HEK293 (cell line): ENCODE measurements at regions of chr19 and their contacts with region 1.

Region 1: DNA sequence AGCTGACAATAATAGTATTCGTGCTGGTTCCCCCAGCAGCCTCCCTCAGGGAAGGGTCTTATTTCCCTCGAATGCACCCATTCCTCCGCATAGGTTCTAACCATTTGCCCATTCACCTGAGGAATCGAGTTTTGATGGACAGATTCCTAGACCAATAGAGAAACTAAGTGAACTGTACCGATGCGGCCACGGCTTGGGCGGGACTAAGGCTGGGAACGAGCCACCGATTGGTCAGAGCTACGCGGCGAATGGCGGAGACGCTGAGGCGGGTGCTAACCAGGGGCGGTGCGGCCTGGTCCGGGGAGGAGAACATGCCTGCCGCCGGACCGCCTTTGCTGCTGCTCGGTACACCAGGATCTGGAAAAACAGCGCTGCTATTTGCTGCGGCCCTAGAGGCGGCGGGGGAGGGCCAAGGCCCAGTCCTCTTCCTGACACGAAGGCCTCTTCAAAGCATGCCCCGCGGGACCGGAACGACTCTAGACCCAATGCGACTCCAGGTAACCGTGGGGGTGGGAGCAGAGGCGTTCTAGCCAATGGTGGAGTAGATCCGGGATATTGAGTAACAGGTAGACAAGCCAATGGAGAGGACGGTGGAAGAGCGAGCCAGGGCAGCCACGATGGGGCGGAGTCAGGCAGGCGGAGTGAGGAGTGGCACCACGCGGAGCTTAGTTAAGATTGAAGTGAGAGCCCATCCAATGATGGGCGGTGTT is at the start of gene SWSAP1:
- H3K4me3 ChIP-seq: peak within 1 kb of the TSS; percentile 86
- H3K27ac ChIP-seq: peak within 1 kb of the TSS; percentile 86
- H3K4me1 ChIP-seq: peaks cover 4% of the 10 kb centered on the region; the same call in 1 of the 2 replicates
- CTCF ChIP-seq: no peak

Region 2: GRCh38 chr19:11293433-11294389 is 80.9 kb before region 1 on chr19:
- CTCF ChIA-PET with region 1: interaction called, 9 read pairs
- POLR2A ChIA-PET with region 1: interaction called, 15 read pairs
- H3K4me3 ChIP-seq: no peak overlapping the region
- H3K27ac ChIP-seq: no peak overlapping the region
- H3K4me1 ChIP-seq: no peaks in the 10 kb centered on the region; the same call in 1 of the 2 replicates
- CTCF ChIP-seq: peak; percentile 93

Region 3: GRCh38 chr19:11339254-11340098 is 35.1 kb before region 1 on chr19 and contains the start of gene RAB3D:
- CTCF ChIA-PET with region 1: no interaction called
- POLR2A ChIA-PET with region 1: interaction called, 12 read pairs
- H3K4me3 ChIP-seq: peak within 1 kb of the TSS; percentile 46
- H3K27ac ChIP-seq: peak within 1 kb of the TSS; percentile 47; the same call in 1 of the 2 replicates
- H3K4me1 ChIP-seq: no peaks in the 10 kb centered on the region
- CTCF ChIP-seq: no peak

Region 4: DNA sequence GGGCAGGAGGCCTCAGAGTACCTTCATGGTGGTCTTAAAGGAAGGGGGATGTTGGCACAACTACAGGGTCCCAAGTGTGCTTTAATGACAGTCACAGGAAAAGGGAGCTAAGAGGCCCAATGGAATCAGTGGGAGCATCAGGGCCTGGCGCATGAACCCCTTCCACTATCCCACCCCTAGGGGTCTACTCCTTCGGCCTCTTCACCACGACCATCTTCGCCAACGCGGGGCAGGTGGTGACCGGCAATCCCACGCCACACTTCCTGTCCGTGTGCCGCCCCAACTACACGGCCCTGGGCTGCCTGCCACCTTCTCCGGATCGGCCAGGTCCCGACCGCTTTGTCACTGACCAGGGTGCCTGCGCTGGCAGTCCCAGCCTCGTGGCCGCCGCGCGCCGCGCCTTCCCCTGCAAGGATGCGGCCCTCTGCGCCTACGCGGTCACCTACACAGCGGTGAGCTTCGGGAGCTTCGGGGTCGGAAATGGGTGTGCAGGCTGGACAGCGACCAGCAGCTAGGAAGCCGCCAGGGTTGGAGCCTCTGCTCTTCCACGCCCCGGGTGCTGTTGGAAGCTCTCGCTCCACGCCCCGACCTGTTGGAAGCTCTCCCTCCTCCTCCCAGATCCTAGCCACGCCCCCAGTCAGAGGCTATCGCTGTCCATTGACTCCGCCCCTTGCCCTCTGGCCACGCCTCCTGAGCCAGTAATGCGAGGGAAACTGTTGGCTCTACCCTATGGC is 13.4 kb before region 1 on chr19:
- CTCF ChIA-PET with region 1: interaction called, 4 read pairs
- POLR2A ChIA-PET with region 1: interaction called, 15 read pairs
- H3K4me3 ChIP-seq: no peak overlapping the region
- H3K27ac ChIP-seq: no peak overlapping the region
- H3K4me1 ChIP-seq: no peaks in the 10 kb centered on the region
- CTCF ChIP-seq: no peak

Region 5: GRCh38 chr19:11405846-11406643 is 31.5 kb after region 1 on chr19:
- CTCF ChIA-PET with region 1: no interaction called
- POLR2A ChIA-PET with region 1: no interaction called
- H3K4me3 ChIP-seq: no peak overlapping the region
- H3K27ac ChIP-seq: no peak overlapping the region
- H3K4me1 ChIP-seq: no peaks in the 10 kb centered on the region
- CTCF ChIP-seq: no peak

Region 6: DNA sequence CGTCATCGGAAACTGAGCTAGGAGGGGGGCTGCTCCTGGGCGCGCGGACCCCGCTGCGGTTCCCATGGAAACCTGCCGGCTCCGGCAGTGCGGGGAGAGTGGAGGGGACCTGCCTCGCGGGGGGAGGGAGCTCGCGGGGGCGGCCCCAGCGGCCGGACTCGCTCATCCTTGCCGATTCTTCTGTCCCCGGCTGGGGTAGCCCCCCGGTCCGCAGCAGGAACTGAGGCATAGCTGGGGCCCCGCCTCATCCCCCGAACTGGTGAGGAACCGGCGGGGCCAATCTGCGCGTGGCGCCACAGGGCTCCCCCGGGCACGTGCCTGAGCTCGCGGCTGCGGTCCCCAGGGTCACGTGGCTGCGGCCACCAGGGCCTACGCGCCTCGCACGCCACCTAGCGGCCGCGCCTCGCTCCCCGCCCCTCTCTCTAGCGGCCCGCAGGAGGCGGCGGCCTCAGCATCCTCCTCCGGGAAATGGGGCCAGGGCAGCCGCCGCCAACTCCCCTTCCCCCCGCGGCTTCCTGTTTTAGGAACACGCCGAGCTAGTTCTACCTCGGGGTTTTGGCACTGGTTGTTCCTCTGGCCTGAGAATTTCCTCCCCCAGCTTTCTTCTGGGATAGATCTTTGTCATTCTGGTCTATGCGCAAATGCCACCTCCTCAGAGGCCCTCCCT is 107.9 kb after region 1 on chr19:
- CTCF ChIA-PET with region 1: interaction called, 11 read pairs
- POLR2A ChIA-PET with region 1: interaction called, 13 read pairs
- H3K4me3 ChIP-seq: peak overlapping the region; percentile 28
- H3K27ac ChIP-seq: peak overlapping the region; percentile 33; the same call in 1 of the 2 replicates
- H3K4me1 ChIP-seq: no peaks in the 10 kb centered on the region
- CTCF ChIP-seq: peak; percentile 97